ENCODE measurements at regions of chr2 and their contacts with region 1.

Region 1: DNA sequence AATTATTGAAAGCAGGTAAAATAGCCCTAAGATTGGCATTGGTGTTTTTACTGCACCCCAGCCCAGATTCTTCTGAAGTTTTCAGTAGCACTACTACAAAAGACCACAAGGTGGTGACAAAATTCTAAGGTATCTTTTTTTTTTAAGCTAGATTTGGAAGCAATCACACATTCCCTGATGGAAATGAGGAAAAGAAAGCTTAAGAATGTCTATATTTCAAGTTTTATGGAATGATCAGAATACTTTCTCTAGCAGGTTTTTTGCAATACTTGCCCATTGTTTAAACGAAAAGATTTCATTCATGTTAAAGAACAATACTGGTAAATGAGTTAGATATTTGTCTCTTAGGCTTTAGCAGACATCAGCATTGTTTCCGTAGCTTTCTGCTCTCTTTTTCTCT is 32.1 kb upstream of the ZNF638 start:
- DNase-seq: peak in 3 of 9 experiments; percentile 12 to 62 (median 48)
- ATAC-seq: no peak
- H3K4me3 ChIP-seq: no peak overlapping the region
- H3K4me3 Mint-ChIP-seq: no peak overlapping the region
- H3K27ac ChIP-seq: no peak overlapping the region
- H3K27ac Mint-ChIP-seq: no peak overlapping the region
- H3K4me1 ChIP-seq: no peaks in the 10 kb centered on the region
- H3K4me1 Mint-ChIP-seq: no peaks in the 10 kb centered on the region
- H3K27me3 ChIP-seq: no peaks in the 10 kb centered on the region
- H3K27me3 Mint-ChIP-seq: peaks cover 6% of the 10 kb centered on the region
- CTCF ChIP-seq: peak; percentile 92

Region 2: DNA sequence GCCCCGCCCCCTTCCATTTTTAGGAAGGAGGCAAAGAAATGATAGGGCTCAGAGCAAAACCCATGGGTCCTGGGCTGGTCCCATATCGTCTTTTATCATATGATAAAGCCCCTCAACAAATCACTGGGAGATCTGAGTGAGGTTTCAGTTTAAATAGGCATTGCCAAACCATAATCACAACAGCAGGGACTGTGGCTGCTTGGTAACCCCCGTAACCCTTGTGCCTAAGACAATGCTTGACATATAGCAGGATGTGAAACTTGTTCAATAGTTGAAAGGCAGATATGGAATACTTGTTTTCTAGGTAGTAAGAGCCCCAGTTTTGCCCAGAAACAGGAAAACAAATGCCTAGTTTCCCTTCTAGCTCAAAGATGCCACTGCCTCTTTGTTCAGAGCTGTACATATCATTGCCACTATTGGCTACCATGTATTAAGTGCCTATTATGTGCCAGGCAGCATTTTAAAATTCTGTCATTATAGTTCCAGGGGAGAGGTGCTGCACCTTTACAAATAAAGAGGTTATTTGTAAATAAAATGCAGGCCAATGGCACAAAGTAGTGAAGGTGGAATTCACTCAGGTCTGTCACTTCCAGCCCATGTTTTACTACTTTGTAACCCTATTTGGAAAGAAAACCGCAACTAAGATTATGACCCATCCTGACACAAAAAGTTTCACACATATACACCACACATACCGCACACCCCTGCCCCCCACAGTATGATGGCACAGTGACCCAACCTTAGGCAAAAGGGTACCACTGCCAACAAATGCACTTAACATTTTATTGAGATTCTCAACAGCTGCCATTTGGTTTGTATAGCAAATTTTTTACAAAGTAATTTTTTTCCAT is 216.9 kb before region 1 on chr2:
- CTCF ChIA-PET with region 1: no interaction called
- POLR2A ChIA-PET with region 1: no interaction called
- intact Hi-C with region 1: no loop called
- DNase-seq: peak in 3 of 9 experiments; percentile 34 to 42 (median 40)
- ATAC-seq: peak; percentile 36
- H3K4me3 ChIP-seq: no peak overlapping the region
- H3K4me3 Mint-ChIP-seq: no peak overlapping the region
- H3K27ac ChIP-seq: no peak overlapping the region
- H3K27ac Mint-ChIP-seq: peak overlapping the region; percentile 14
- H3K4me1 ChIP-seq: peaks cover 7% of the 10 kb centered on the region
- H3K4me1 Mint-ChIP-seq: peaks cover 15% of the 10 kb centered on the region
- H3K27me3 ChIP-seq: no peaks in the 10 kb centered on the region
- H3K27me3 Mint-ChIP-seq: peaks cover 8% of the 10 kb centered on the region
- CTCF ChIP-seq: no peak

Region 3: GRCh38 chr2:71331581-71332434 is 32.3 kb after region 1 on chr2 and contains the start of gene ZNF638:
- CTCF ChIA-PET with region 1: interaction called, 19 read pairs
- POLR2A ChIA-PET with region 1: interaction called, 3 read pairs
- intact Hi-C with region 1: loop called (anchors 1 kb)
- DNase-seq: peak; percentile 83 to 98 (median 92)
- ATAC-seq: peak; percentile 97
- H3K4me3 ChIP-seq: peak within 1 kb of the TSS; percentile 74 to 98
- H3K4me3 Mint-ChIP-seq: peak within 1 kb of the TSS; percentile 99
- H3K27ac ChIP-seq: peak within 1 kb of the TSS; percentile 95 to 98
- H3K27ac Mint-ChIP-seq: peak within 1 kb of the TSS; percentile 100
- H3K4me1 ChIP-seq: peaks cover 40% of the 10 kb centered on the region
- H3K4me1 Mint-ChIP-seq: peaks cover 42% of the 10 kb centered on the region
- H3K27me3 ChIP-seq: no peaks in the 10 kb centered on the region
- H3K27me3 Mint-ChIP-seq: peaks cover 5% of the 10 kb centered on the region
- CTCF ChIP-seq: peak; percentile 66
- total RNA-seq, gene ZNF638: 61.9 to 71.1 TPM

Region 4: DNA sequence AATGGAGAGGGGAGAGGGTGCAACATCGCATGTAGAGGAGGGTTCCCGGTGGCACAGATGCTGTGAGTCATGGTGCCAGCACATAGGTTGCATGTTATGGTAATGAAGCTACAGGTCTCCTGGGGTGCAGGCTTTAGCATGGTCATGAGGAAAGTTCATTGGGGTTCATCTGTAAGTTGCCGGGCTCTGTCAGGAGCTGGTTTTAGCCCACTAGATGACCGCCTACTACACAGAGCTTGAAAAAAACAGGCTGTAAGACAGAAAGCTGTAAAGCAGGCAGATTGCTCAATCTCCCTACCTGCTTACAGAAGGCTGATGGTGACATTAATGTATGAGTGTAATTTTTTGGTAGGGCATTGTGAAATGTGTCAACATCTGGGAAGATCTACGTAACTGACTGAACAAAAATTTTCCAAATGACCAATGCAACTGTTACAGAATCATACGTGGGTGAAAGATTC is 177.8 kb after region 1 on chr2:
- CTCF ChIA-PET with region 1: interaction called, 10 read pairs
- POLR2A ChIA-PET with region 1: no interaction called
- intact Hi-C with region 1: no loop called
- DNase-seq: no peak
- ATAC-seq: no peak
- H3K4me3 ChIP-seq: no peak overlapping the region
- H3K4me3 Mint-ChIP-seq: no peak overlapping the region
- H3K27ac ChIP-seq: no peak overlapping the region
- H3K27ac Mint-ChIP-seq: no peak overlapping the region
- H3K4me1 ChIP-seq: no peaks in the 10 kb centered on the region
- H3K4me1 Mint-ChIP-seq: no peaks in the 10 kb centered on the region
- H3K27me3 ChIP-seq: no peaks in the 10 kb centered on the region
- H3K27me3 Mint-ChIP-seq: peaks cover 6% of the 10 kb centered on the region
- CTCF ChIP-seq: no peak

Region 5: DNA sequence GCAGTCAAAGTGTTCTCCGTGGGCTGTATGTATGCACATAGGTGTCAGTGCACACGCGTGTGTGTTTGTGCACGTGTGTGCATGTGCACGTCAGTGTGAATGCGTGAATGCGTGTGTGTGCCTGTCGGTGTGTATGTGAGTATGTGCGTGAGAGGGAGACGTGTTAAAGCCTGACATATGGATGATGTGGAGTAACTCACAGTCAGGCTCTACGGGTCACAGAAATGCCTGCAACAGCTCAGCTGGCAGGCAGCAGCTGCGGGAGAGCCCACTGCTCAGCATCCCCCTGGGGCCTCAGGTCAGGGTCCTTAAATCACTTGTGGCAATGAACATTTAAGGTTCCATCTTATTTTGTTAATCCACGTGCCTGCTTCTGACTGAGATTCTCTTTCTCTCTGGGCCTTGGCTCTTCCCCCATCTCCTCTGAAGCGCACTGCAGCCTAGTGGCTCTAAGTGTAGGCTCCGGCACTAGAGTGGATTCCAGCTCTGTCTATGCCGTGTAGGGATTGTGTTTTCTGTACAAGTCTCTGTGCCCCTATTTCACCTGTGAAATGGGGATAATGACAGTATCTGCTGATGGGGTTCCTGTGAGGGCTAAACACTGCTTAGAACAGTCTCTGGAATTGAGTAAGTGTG is 216.9 kb after region 1 on chr2:
- CTCF ChIA-PET with region 1: interaction called, 322 read pairs
- POLR2A ChIA-PET with region 1: no interaction called
- intact Hi-C with region 1: no loop called
- DNase-seq: no peak
- ATAC-seq: no peak
- H3K4me3 ChIP-seq: no peak overlapping the region
- H3K4me3 Mint-ChIP-seq: no peak overlapping the region
- H3K27ac ChIP-seq: no peak overlapping the region
- H3K27ac Mint-ChIP-seq: no peak overlapping the region
- H3K4me1 ChIP-seq: no peaks in the 10 kb centered on the region
- H3K4me1 Mint-ChIP-seq: no peaks in the 10 kb centered on the region
- H3K27me3 ChIP-seq: no peaks in the 10 kb centered on the region
- H3K27me3 Mint-ChIP-seq: peaks cover 4% of the 10 kb centered on the region
- CTCF ChIP-seq: no peak

Region 6: GRCh38 chr2:72150157-72150865 is 850.8 kb after region 1 on chr2:
- CTCF ChIA-PET with region 1: interaction called, 5 read pairs
- POLR2A ChIA-PET with region 1: no interaction called
- intact Hi-C with region 1: loop called in 1 of 2 experiments (anchors 10 kb)
- DNase-seq: peak; percentile 20 to 73 (median 58)
- ATAC-seq: peak; percentile 70
- H3K4me3 ChIP-seq: peak overlapping the region; percentile 31 to 51
- H3K4me3 Mint-ChIP-seq: peak overlapping the region; percentile 79
- H3K27ac ChIP-seq: no peak overlapping the region
- H3K27ac Mint-ChIP-seq: no peak overlapping the region
- H3K4me1 ChIP-seq: peaks cover 39% of the 10 kb centered on the region
- H3K4me1 Mint-ChIP-seq: peaks cover 35% of the 10 kb centered on the region
- H3K27me3 ChIP-seq: peaks cover 31 to 39% of the 10 kb centered on the region in 2 experiments
- H3K27me3 Mint-ChIP-seq: peaks cover 64% of the 10 kb centered on the region
- CTCF ChIP-seq: peak; percentile 74

Region 7: DNA sequence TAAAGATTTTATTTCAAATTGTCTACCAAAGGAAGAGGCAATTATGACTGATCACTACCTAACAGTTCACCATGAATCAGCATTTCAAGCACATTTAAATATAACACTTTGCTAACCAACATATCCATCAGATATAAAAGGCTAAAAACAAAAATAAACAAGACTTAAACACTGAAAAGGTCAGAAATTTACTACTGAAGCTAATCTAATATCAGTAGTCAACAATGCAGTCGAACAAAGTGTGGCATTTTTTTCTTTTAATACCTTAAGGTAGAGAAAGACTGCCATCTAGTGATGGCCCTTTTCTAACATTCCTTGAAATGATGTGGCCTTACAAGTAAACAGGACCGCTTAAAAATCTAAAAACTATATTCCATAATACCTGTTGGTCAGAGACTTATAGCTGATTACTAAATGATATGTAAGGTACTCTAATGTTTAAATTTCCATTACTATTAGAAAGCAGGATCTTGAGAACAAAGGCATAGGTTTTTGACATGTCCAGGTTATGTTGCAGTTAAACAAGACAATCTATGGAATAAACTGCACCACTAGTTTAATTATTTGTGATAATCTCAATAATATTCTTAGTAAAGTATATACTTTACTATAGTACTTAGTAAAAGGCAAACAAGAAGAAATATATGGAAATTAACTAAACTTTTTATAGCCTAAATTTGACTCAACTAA is 1446.3 kb after region 1 on chr2:
- CTCF ChIA-PET with region 1: no interaction called
- POLR2A ChIA-PET with region 1: no interaction called
- intact Hi-C with region 1: loop called in 1 of 2 experiments (anchors 10 kb)
- DNase-seq: peak in 2 of 9 experiments; percentile 45 to 55
- ATAC-seq: no peak
- H3K4me3 ChIP-seq: no peak overlapping the region
- H3K4me3 Mint-ChIP-seq: no peak overlapping the region
- H3K27ac ChIP-seq: no peak overlapping the region
- H3K27ac Mint-ChIP-seq: no peak overlapping the region
- H3K4me1 ChIP-seq: no peaks in the 10 kb centered on the region
- H3K4me1 Mint-ChIP-seq: no peaks in the 10 kb centered on the region
- H3K27me3 ChIP-seq: no peaks in the 10 kb centered on the region
- H3K27me3 Mint-ChIP-seq: no peaks in the 10 kb centered on the region
- CTCF ChIP-seq: peak; percentile 59